H1 (cell line): ENCODE measurements at regions of chr5 and their contacts with region 1.

Region 1: DNA sequence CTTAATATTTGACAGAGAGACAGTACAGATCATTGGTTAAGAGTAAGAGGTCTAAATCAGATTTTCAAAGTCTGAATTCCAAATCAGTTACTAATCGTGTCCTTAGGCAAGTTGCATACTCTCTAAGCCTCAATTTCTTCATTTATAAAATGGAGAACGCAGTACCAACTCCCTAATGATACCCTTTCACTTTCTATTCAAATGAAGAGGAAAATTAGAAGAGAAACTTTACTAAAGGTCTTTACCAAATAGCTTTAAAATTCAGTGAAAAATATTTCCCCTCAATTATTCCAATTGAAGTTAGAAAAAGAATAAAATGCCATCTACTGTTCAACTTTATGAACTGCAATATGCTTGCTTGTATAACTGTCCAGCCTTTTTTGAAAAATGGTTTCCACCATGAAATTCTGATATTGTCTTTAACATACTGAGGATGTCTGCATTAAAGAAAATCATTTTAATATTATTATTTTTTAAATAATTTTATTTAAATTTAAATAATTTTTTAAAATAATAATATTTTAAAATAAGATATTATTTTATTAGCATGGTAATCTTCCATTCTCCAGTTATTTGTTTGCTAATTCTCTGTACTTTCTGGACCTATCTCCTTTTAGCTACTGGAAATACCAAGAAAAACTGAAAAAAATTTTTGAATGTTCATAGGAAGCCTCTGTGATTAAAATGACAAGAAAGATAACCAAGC is 36.0 kb downstream of the POC5 start:
- DNase-seq: no peak
- H3K4me3 ChIP-seq: no peak overlapping the region
- H3K27ac ChIP-seq: no peak overlapping the region
- H3K4me1 ChIP-seq: no peaks in the 10 kb centered on the region
- H3K27me3 ChIP-seq: no peaks in the 10 kb centered on the region
- CTCF ChIP-seq: peak in 1 of 3 experiments; percentile 32; a peak in 2 of 4 replicates
- EP300 ChIP-seq: no peak
- POLR2A ChIP-seq: no peak
- RAD21 ChIP-seq: peak in 1 of 2 experiments; percentile 38; a peak in 3 of 4 replicates

Region 2: GRCh38 chr5:75668977-75669689 is 12.1 kb before region 1 on chr5:
- CTCF ChIA-PET with region 1: interaction called, 33 read pairs
- POLR2A ChIA-PET with region 1: no interaction called
- DNase-seq: no peak
- H3K4me3 ChIP-seq: no peak overlapping the region
- H3K27ac ChIP-seq: no peak overlapping the region
- H3K4me1 ChIP-seq: peaks cover 0 to 7% (median 0%) of the 10 kb centered on the region in 4 experiments; a peak in 2 of 7 replicates
- H3K27me3 ChIP-seq: no peaks in the 10 kb centered on the region
- CTCF ChIP-seq: no peak
- EP300 ChIP-seq: no peak
- POLR2A ChIP-seq: no peak
- RAD21 ChIP-seq: no peak